Activated B cell treated with CpG ODN at 0.5 μM for 24 hours (primary cell): ENCODE measurements at regions of chr19 and their contacts with region 1.

Region 1: GRCh38 chr19:17470068-17470841 is at the start of gene SLC27A1:
- DNase-seq: peak; percentile 85
- ATAC-seq: peak; percentile 81
- H3K4me3 Mint-ChIP-seq: peak within 1 kb of the TSS; percentile 91
- H3K27ac Mint-ChIP-seq: peak within 1 kb of the TSS; percentile 84
- H3K4me1 Mint-ChIP-seq: peaks cover 23% of the 10 kb centered on the region
- H3K27me3 Mint-ChIP-seq: no peaks in the 10 kb centered on the region
- CTCF ChIP-seq: no peak
- total RNA-seq, gene SLC27A1: 4.3 and 4.6 TPM in 2 replicates

Region 2: GRCh38 chr19:17266975-17267788 is 203.1 kb before region 1 on chr19 and contains the start of gene BABAM1:
- CTCF ChIA-PET with region 1: no interaction called
- POLR2A ChIA-PET with region 1: no interaction called
- intact Hi-C with region 1: loop called (anchors 1 kb)
- DNase-seq: peak; percentile 81
- ATAC-seq: peak; percentile 89
- H3K4me3 Mint-ChIP-seq: peak within 1 kb of the TSS; percentile 91
- H3K27ac Mint-ChIP-seq: peak within 1 kb of the TSS; percentile 93
- H3K4me1 Mint-ChIP-seq: peaks cover 29% of the 10 kb centered on the region
- H3K27me3 Mint-ChIP-seq: no peaks in the 10 kb centered on the region
- CTCF ChIP-seq: no peak
- total RNA-seq, gene BABAM1: 121 and 135 TPM in 2 replicates

Region 3: DNA sequence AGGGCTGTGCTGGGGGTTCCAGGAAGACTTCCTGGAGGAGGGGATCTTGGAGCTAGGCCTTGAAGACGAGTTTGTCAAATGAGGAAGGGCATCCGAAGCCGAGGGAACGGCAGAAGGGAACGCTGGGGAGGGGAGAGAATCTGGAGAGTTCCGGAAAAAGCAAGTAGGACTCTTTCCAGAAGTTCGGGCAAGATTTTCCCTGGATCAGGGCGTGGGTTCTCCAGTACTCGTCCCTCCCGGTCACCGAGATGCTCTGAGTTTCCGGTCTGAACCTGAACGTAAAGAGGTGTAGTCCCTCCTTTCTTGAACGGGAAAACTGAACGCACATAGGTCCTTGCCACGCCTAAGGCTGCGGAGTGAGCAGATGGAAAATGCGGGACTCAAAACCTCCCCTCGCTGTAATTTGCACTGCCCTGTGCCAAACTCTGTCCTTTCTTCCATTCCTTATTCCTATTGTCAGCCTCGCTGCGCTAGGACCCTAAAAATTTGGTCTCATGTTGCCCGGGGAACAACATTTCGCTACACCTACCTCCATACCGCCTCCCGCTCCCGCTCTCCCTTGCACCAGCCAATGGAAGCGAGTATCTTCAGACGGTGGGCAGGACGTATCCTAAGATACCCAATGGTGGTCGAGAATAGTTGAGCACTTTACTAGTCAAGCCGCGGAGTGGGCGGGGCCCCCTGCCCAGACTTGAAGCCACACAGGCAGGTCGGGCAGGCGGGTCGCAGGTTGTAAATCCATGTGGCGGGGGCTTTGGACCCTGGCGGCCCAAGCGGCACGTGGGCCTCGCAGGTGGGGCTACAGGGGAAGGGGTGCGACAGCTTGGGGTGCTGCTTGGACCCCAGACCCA is 133.2 kb before region 1 on chr19 and contains the start of gene GTPBP3:
- CTCF ChIA-PET with region 1: no interaction called
- POLR2A ChIA-PET with region 1: interaction called, 7 read pairs
- intact Hi-C with region 1: loop called (anchors 2 kb)
- DNase-seq: peak; percentile 87
- ATAC-seq: peak; percentile 88
- H3K4me3 Mint-ChIP-seq: peak within 1 kb of the TSS; percentile 90
- H3K27ac Mint-ChIP-seq: peak within 1 kb of the TSS; percentile 89
- H3K4me1 Mint-ChIP-seq: peaks cover 36% of the 10 kb centered on the region
- H3K27me3 Mint-ChIP-seq: no peaks in the 10 kb centered on the region
- CTCF ChIP-seq: no peak
- total RNA-seq, gene GTPBP3: 32.4 and 40.2 TPM in 2 replicates

Region 4: GRCh38 chr19:17390665-17391370 is 79.4 kb before region 1 on chr19:
- CTCF ChIA-PET with region 1: interaction called, 3 read pairs
- POLR2A ChIA-PET with region 1: interaction called, 3 read pairs
- intact Hi-C with region 1: loop called (anchors 1 kb)
- DNase-seq: peak; percentile 85
- ATAC-seq: peak; percentile 100
- H3K4me3 Mint-ChIP-seq: peak overlapping the region; percentile 86
- H3K27ac Mint-ChIP-seq: peak overlapping the region; percentile 24
- H3K4me1 Mint-ChIP-seq: peaks cover 21% of the 10 kb centered on the region
- H3K27me3 Mint-ChIP-seq: no peaks in the 10 kb centered on the region
- CTCF ChIP-seq: no peak

Region 5: GRCh38 chr19:17419621-17420466 is 50.4 kb before region 1 on chr19 and contains the start of gene MVB12A:
- CTCF ChIA-PET with region 1: no interaction called
- POLR2A ChIA-PET with region 1: interaction called, 4 read pairs
- intact Hi-C with region 1: loop called (anchors 2 kb)
- DNase-seq: peak; percentile 91
- ATAC-seq: peak; percentile 97
- H3K4me3 Mint-ChIP-seq: peak within 1 kb of the TSS; percentile 95
- H3K27ac Mint-ChIP-seq: peak within 1 kb of the TSS; percentile 93
- H3K4me1 Mint-ChIP-seq: peaks cover 16% of the 10 kb centered on the region
- H3K27me3 Mint-ChIP-seq: no peaks in the 10 kb centered on the region
- CTCF ChIP-seq: no peak
- total RNA-seq, gene MVB12A: 22.8 and 23.3 TPM in 2 replicates

Region 6: GRCh38 chr19:17511724-17512573 is 41.7 kb after region 1 on chr19:
- CTCF ChIA-PET with region 1: interaction called, 5 read pairs
- POLR2A ChIA-PET with region 1: interaction called, 6 read pairs
- intact Hi-C with region 1: loop called (anchors 1 kb)
- DNase-seq: peak; percentile 95
- ATAC-seq: peak; percentile 82
- H3K4me3 Mint-ChIP-seq: peak overlapping the region; percentile 100
- H3K27ac Mint-ChIP-seq: peak overlapping the region; percentile 98
- H3K4me1 Mint-ChIP-seq: peaks cover 50% of the 10 kb centered on the region
- H3K27me3 Mint-ChIP-seq: no peaks in the 10 kb centered on the region
- CTCF ChIP-seq: no peak